Activated CD4-positive, alpha-beta memory T cell treated with anti-CD3 and anti-CD28 coated beads, Interleukin-2, amount 10 ng/mL, durations not matched to agents 7 days and 5 days (primary cell): ENCODE measurements at regions of chr15 and their contacts with region 1.

Region 1: DNA sequence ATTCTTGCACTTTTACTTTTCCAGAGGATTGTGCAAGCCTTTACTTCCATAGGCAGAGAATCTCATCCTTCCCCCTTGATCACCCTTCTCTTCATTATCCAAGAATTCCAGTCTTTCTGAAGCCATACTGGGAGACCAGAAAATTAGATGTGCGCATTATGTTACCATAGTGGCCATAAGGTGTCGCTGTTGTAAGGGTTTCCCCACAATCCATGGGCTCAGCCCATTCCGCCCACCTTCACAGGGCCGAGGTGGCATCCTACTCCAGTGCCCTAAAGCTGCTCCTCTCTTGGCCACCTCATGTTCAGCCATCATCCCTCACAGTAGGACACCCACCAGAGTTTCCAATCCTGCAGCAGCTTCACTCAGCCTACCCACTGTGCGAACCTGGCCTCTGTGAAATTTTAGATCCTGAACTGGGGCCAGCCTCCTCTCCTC is 35.0 kb downstream of the CTSH start:
- DNase-seq: no peak
- H3K4me3 Mint-ChIP-seq: no peak overlapping the region
- H3K27ac Mint-ChIP-seq: no peak overlapping the region
- H3K4me1 Mint-ChIP-seq: peaks cover 34% of the 10 kb centered on the region
- H3K27me3 Mint-ChIP-seq: no peaks in the 10 kb centered on the region

Region 2: DNA sequence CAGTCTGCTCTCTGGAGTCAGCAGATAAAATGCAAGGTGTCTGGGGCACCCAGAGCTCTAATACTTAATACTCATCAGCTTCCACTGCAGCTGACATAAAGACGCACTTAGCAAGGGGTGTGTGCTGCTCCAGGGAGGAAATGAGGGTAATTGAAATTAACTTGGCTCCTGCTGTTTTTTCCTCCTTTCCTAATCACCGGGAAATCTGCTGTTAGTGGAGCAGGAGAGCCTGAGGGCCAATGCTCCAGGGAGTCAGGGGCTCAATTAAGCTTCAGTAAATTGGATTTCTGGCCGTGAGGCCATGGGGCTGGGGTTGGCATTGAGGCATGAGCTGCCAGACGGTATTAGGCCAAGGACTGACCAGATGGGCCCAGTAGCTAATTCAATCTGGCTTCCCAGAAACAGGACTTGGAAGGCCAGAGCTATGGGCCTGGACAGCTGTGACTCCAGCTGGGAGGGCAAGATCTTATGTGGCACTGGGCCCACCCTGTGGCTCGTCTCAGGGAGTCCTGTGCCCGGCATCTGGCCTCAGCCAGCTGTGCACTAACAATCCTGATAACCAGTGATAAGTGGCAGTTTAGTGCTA is 238.1 kb before region 1 on chr15:
- CTCF ChIA-PET with region 1: no interaction called
- POLR2A ChIA-PET with region 1: no interaction called
- DNase-seq: no peak
- H3K4me3 Mint-ChIP-seq: no peak overlapping the region
- H3K27ac Mint-ChIP-seq: no peak overlapping the region
- H3K4me1 Mint-ChIP-seq: no peaks in the 10 kb centered on the region
- H3K27me3 Mint-ChIP-seq: peaks cover 12% of the 10 kb centered on the region

Region 3: DNA sequence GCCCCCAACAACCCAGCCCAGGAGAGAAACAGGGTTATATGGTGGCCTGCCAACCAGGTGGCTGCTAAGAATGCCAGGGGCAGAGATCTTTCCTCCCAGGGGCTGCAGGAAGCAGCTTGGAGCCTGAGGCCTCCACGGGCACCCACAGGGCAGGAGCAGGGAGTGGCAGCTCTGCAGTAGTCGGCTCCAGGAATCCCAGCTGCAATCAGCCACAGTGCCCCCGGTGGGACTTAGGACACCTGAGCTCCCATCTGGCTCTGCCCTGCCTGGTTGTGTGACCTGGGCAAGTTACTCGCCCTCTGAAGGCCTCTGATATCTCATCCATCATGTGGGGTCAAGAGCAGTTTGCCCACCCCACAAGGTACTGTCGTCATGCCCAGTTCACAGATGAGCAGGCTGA is 114.1 kb before region 1 on chr15:
- CTCF ChIA-PET with region 1: no interaction called
- POLR2A ChIA-PET with region 1: no interaction called
- DNase-seq: no peak
- H3K4me3 Mint-ChIP-seq: no peak overlapping the region
- H3K27ac Mint-ChIP-seq: no peak overlapping the region
- H3K4me1 Mint-ChIP-seq: peaks cover under 1% of the 10 kb centered on the region
- H3K27me3 Mint-ChIP-seq: peaks cover 3% of the 10 kb centered on the region

Region 4: GRCh38 chr15:78893538-78893937 is 16.3 kb before region 1 on chr15:
- CTCF ChIA-PET with region 1: interaction called, 24 read pairs
- POLR2A ChIA-PET with region 1: interaction called, 4 read pairs
- DNase-seq: no peak
- H3K4me3 Mint-ChIP-seq: no peak overlapping the region
- H3K27ac Mint-ChIP-seq: no peak overlapping the region
- H3K4me1 Mint-ChIP-seq: peaks cover 11% of the 10 kb centered on the region
- H3K27me3 Mint-ChIP-seq: no peaks in the 10 kb centered on the region

Region 5: GRCh38 chr15:78954889-78955288 is 45.1 kb after region 1 on chr15:
- CTCF ChIA-PET with region 1: no interaction called
- POLR2A ChIA-PET with region 1: no interaction called
- DNase-seq: no peak
- H3K4me3 Mint-ChIP-seq: no peak overlapping the region
- H3K27ac Mint-ChIP-seq: no peak overlapping the region
- H3K4me1 Mint-ChIP-seq: peaks cover 16% of the 10 kb centered on the region
- H3K27me3 Mint-ChIP-seq: no peaks in the 10 kb centered on the region

Region 6: GRCh38 chr15:78979456-78980320 is 69.9 kb after region 1 on chr15:
- CTCF ChIA-PET with region 1: interaction called, 49 read pairs
- POLR2A ChIA-PET with region 1: no interaction called
- DNase-seq: peak; percentile 50
- H3K4me3 Mint-ChIP-seq: no peak overlapping the region
- H3K27ac Mint-ChIP-seq: no peak overlapping the region
- H3K4me1 Mint-ChIP-seq: peaks cover 25% of the 10 kb centered on the region
- H3K27me3 Mint-ChIP-seq: peaks cover 8% of the 10 kb centered on the region

Region 7: DNA sequence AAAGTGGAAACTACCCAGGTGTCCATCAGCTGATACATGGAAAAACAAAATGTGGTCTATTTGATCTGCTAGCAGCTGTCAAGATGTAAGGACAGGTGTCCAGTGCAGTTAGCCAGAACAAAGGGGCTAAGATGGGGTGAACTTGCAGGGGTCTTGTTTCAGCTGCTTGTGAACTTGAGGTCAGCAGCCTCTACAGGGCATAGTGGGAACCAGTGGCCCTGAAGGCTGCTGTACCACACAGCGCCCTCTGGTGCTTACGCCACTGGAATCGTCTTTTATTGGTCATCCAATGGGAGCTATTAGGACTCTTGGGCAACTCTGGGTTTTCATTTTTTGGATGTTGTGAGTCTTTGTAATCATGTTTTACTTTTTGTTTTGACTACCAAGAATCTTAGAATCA is 97.3 kb after region 1 on chr15:
- CTCF ChIA-PET with region 1: interaction called, 25 read pairs
- POLR2A ChIA-PET with region 1: no interaction called
- DNase-seq: peak; percentile 55
- H3K4me3 Mint-ChIP-seq: no peak overlapping the region
- H3K27ac Mint-ChIP-seq: no peak overlapping the region
- H3K4me1 Mint-ChIP-seq: peaks cover 14% of the 10 kb centered on the region
- H3K27me3 Mint-ChIP-seq: peaks cover 3% of the 10 kb centered on the region

Region 8: GRCh38 chr15:79184465-79184892 is 274.7 kb after region 1 on chr15:
- CTCF ChIA-PET with region 1: interaction called, 31 read pairs
- POLR2A ChIA-PET with region 1: no interaction called
- DNase-seq: peak; percentile 71
- H3K4me3 Mint-ChIP-seq: no peak overlapping the region
- H3K27ac Mint-ChIP-seq: no peak overlapping the region
- H3K4me1 Mint-ChIP-seq: no peaks in the 10 kb centered on the region
- H3K27me3 Mint-ChIP-seq: peaks cover 8% of the 10 kb centered on the region